Heart left ventricle (tissue), 16 donors: ENCODE measurements at regions of chr4 and their contacts with region 1.

Region 1: DNA sequence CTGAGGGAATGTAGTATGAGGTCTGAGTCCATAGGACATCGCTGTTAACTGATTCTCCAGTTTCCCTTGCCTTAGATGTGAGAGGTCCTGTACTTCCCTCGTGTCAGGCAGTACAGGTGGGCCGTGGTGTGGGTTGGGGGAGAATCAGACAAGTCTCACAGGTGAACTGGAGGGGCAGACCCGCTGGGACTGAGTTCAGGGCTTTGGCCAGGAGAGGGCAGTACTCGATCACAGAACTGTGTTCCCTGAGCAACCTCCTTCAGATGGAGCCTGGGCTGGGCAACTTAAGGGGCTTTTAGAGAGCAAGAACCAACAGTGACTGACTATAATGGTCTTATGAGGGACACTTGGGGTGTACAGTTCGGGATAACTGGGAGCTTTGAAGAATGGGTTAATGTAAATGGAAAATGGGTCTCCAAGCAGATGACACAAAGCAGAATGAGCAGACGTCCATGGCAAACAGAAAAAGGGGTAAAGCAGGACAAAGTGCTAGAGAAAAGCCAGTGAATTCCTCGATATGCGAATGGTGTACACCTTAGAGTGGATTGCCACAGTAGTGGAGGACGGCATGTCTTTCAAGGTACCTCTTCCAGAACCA is 83.6 kb downstream of the CCNG2 start:
- DNase-seq: peak; percentile 26 to 66 (median 47)
- ATAC-seq: peak in 3 of 4 donors; percentile 73 to 79 (median 75)
- H3K4me3 ChIP-seq: no peak overlapping the region
- H3K27ac ChIP-seq: no peak overlapping the region
- H3K4me1 ChIP-seq: no peaks in the 10 kb centered on the region
- H3K27me3 ChIP-seq: peaks cover 0 to 5% (median 0%) of the 10 kb centered on the region in 9 donors
- CTCF ChIP-seq: peak; percentile 39 to 75 (median 64)
- POLR2A ChIP-seq: no peak

Region 2: GRCh38 chr4:76251441-76252270 is 988.9 kb before region 1 on chr4 and contains the start of gene FAM47E:
- intact Hi-C with region 1: no loop called
- DNase-seq: peak; percentile 71 to 89 (median 87)
- ATAC-seq: peak; percentile 96 to 99 (median 99)
- H3K4me3 ChIP-seq: peak within 1 kb of the TSS; percentile 20 to 73 (median 63)
- H3K27ac ChIP-seq: peak within 1 kb of the TSS in 7 of 12 donors; percentile 4 to 62 (median 46)
- H3K4me1 ChIP-seq: peaks cover 0 to 17% (median 8%) of the 10 kb centered on the region in 12 donors
- H3K27me3 ChIP-seq: peaks cover 0 to 50% (median 0%) of the 10 kb centered on the region in 9 donors
- CTCF ChIP-seq: peak; percentile 9 to 59 (median 38)
- POLR2A ChIP-seq: peak in 1 of 2 donors; percentile 29
- total RNA-seq, gene FAM47E: 0.48 to 4.9 (median 2.5) TPM

Region 3: DNA sequence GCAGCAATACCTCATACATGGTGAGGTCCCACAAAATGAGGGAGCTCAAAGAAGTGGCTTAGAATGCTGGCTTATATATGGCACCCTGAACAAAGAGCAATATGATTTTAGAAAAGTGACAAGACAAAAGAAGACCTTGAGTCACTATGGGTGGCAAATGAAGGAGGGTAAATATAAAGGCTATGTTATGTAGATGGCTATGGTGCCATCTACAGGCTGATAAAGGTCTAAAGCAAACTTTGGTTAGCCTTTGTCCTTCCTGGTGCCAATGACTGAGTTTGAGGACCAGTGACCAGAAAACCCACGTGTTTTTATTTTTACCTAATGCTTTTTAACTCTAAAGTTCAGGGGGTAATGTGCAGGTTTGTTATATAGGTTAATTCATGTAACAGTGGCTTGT is 68.3 kb after region 1 on chr4:
- intact Hi-C with region 1: loop called in 4 of 10 experiments (anchors 5 kb)
- DNase-seq: no peak
- ATAC-seq: peak in 2 of 4 donors; percentile 65 to 72
- H3K4me3 ChIP-seq: no peak overlapping the region
- H3K27ac ChIP-seq: no peak overlapping the region
- H3K4me1 ChIP-seq: no peaks in the 10 kb centered on the region
- H3K27me3 ChIP-seq: no peaks in the 10 kb centered on the region
- CTCF ChIP-seq: peak in 11 of 12 donors; percentile 11 to 52 (median 37)
- POLR2A ChIP-seq: no peak

Region 4: GRCh38 chr4:77358315-77358928 is 117.9 kb after region 1 on chr4:
- intact Hi-C with region 1: loop called (anchors 1 to 5 kb)
- DNase-seq: peak in 1 of 5 donors; percentile 11
- ATAC-seq: peak in 3 of 4 donors; percentile 61 to 64 (median 63)
- H3K4me3 ChIP-seq: no peak overlapping the region
- H3K27ac ChIP-seq: no peak overlapping the region
- H3K4me1 ChIP-seq: no peaks in the 10 kb centered on the region
- H3K27me3 ChIP-seq: no peaks in the 10 kb centered on the region
- CTCF ChIP-seq: peak; percentile 39 to 67 (median 54)
- POLR2A ChIP-seq: no peak

Region 5: DNA sequence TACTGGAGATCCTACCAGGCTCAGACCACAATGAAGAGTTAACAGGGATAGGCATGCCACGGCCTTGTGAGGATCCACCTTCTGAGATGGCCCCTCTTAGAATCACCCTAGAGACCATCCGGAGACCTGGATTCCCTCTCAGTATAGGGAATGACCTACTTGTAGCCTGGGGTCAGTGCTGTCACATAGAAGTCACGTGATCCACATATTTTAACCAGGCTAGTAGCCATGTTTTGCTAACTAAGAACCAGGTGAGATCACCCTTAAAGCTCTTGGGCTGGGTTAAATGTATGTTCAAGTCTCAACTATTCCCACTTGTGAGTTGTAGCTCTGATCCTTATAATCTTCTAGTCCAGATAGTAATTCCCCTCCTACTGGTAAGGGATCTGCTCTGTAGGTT is 131.8 kb after region 1 on chr4:
- intact Hi-C with region 1: no loop called
- DNase-seq: no peak
- ATAC-seq: no peak
- H3K4me3 ChIP-seq: no peak overlapping the region
- H3K27ac ChIP-seq: no peak overlapping the region
- H3K4me1 ChIP-seq: no peaks in the 10 kb centered on the region
- H3K27me3 ChIP-seq: peaks cover 0 to 6% (median 0%) of the 10 kb centered on the region in 9 donors
- CTCF ChIP-seq: no peak
- POLR2A ChIP-seq: no peak

Region 6: GRCh38 chr4:77433418-77433733 is 192.8 kb after region 1 on chr4:
- intact Hi-C with region 1: loop called in 5 of 10 experiments (anchors 10 kb)
- DNase-seq: peak in 1 of 5 donors; percentile 23
- ATAC-seq: peak in 3 of 4 donors; percentile 59 to 85 (median 80)
- H3K4me3 ChIP-seq: peak overlapping the region in 1 of 12 donors; percentile 25
- H3K27ac ChIP-seq: peak overlapping the region in 1 of 12 donors; percentile 31
- H3K4me1 ChIP-seq: peaks cover 0 to 28% (median 7%) of the 10 kb centered on the region in 12 donors
- H3K27me3 ChIP-seq: no peaks in the 10 kb centered on the region
- CTCF ChIP-seq: peak; percentile 39 to 74 (median 58)
- POLR2A ChIP-seq: no peak

Region 7: GRCh38 chr4:77600521-77601451 is 360.2 kb after region 1 on chr4:
- intact Hi-C with region 1: loop called in 1 of 10 experiments (anchors 10 kb)
- DNase-seq: no peak
- ATAC-seq: no peak
- H3K4me3 ChIP-seq: no peak overlapping the region
- H3K27ac ChIP-seq: no peak overlapping the region
- H3K4me1 ChIP-seq: no peaks in the 10 kb centered on the region
- H3K27me3 ChIP-seq: peaks cover 0 to 2% (median 0%) of the 10 kb centered on the region in 9 donors
- CTCF ChIP-seq: peak; percentile 62 to 80 (median 73)
- POLR2A ChIP-seq: no peak

Region 8: DNA sequence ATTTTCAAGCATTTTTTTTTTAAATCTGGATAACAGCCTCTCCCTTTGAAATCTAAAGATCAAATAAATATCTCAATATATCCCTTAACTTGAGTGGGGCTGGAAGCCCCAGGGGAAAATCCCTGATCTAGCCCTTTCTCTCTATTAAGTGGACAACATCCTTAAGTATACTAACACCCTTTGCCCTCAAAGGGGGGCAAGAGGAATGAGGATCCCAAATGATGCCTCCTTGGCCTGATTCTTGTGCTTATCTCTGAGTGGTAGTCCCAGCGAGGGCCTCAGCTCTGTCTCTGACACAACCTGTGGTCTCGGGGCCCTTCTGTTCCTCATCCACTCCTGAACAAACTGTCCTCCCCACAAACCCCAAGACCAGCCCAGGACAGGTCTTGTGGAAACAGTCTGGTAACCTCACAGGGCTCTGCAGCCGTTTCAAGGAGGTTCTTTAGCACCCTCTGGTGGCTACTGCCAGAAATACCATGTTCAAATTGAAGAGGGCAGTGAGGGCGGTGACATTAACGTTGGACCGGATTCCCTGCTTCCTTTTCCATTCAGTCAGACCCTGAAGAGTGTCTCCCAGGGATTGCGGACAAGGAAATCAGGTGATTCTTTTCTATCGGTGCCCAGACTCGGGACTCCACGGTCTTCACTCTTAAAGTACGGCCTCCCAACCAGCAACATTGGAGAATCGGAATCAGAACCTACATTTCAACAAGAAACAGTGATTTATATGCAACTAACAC is 378.0 kb after region 1 on chr4:
- intact Hi-C with region 1: loop called in 1 of 10 experiments (anchors 5 kb)
- DNase-seq: peak in 4 of 5 donors; percentile 45 to 69 (median 60)
- ATAC-seq: peak; percentile 61 to 95 (median 92)
- H3K4me3 ChIP-seq: no peak overlapping the region
- H3K27ac ChIP-seq: no peak overlapping the region
- H3K4me1 ChIP-seq: peaks cover 0 to 4% (median 0%) of the 10 kb centered on the region in 12 donors
- H3K27me3 ChIP-seq: peaks cover 0 to 7% (median 0%) of the 10 kb centered on the region in 9 donors
- CTCF ChIP-seq: peak; percentile 70 to 89 (median 79)
- POLR2A ChIP-seq: no peak